ENCODE measurements at regions of chr2 and their contacts with region 1.

Region 1: DNA sequence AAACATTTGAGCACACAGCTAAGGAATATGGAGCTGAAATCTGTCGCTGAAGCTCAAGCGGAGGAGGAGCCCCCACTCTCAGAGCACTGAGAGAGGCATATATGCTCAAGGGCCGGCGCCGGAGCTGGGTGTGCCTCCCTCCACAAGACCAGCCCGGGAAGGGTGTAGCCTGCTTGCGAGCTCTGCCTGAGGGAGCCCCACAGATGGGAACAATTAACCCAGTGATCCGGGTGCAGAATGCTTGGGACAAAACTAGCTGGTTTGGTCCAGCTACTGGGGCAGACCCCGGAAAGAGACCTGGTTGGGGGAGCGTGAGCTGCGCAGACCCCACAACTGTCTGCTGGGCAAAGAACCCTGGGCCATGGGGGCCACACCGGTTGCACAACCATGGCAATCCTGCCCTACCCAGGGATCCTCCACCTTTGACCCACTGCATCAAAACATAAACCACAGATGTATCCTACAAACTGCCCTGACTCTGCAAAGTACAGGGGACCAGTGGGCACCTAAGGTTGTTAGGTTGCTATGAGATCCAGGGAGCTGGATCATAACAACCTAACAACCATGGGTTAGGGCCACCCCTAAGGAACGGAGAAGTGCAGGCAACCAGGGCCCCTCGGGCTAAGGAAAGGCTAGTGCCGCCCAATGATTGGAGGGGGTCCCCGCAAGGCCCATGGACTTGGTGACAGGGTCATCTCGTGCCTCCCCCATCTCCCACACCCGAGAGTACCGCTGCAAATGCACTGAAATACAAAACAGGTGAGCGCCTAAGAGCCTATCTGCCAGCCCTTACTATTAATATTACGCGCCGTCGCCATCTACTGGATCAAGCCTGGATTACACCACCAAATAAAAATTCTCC is 53.4 kb upstream of the SCN1A start:
- DNase-seq: peak; percentile 66
- H3K4me3 ChIP-seq: no peak overlapping the region
- H3K27ac ChIP-seq: no peak overlapping the region
- H3K27me3 ChIP-seq: no peaks in the 10 kb centered on the region
- CTCF ChIP-seq: peak; percentile 72

Region 2: DNA sequence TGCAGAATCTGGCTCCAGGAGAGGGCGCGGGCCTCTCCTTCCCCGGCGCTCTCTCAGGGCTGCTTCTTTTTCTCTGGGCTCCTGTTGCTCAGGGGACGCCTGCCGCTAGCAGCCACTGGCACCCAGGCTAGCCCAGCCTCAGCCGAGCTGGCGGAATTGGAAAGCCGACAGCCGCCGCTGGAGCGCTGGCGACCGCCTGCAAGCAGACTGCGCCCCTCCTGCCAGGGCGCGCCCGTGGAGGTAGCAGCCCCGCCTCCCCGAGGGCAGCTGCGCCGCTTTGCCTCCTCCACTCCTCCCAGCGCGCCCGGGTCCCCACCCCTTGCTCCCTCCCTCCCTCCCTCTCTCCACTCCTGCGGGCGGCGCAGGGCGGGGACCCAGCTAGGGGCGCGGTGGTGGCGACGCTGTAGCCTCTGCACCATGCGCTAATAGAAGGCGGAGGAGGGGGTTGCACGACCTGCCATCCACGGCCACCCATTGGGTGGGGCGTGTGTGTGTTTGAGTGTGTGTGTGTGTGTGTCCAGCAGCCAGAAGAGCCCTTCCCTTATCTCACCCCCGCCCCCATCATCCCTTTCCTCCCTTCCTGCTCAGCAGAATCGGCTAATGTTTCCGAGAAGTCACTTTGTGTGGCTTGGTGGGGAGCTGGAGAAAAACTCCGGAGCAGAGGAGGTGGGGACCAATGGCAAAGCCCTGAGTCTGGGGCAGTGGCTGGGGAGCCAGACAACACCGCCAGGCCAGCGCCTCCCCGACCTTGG is 194.7 kb after region 1 on chr2 and contains the start of gene SCN9A:
- in situ Hi-C with region 1: loop called (anchors 25 kb)
- DNase-seq: peak; percentile 42
- H3K4me3 ChIP-seq: peak within 1 kb of the TSS; percentile 71
- H3K27ac ChIP-seq: peak within 1 kb of the TSS; percentile 3
- H3K27me3 ChIP-seq: no peaks in the 10 kb centered on the region
- CTCF ChIP-seq: peak; percentile 3